Gastrocnemius medialis (tissue), 4 donors: ENCODE measurements at regions of chr11 and their contacts with region 1.

Region 1: GRCh38 chr11:64269380-64270234 is 14.9 kb downstream of the BAD start:
- DNase-seq: peak; percentile 99
- ATAC-seq: peak; percentile 84 to 91
- H3K4me3 ChIP-seq: peak overlapping the region; percentile 82 to 100 (median 93)
- H3K27ac ChIP-seq: peak overlapping the region; percentile 94 to 99 (median 98)
- H3K4me1 ChIP-seq: peaks cover 22% of the 10 kb centered on the region in 2 donors
- H3K27me3 ChIP-seq: no peaks in the 10 kb centered on the region
- CTCF ChIP-seq: peak in 3 of 5 experiments; percentile 11 to 22 (median 16)
- POLR2A ChIP-seq: peak; percentile 35 to 47

Region 2: GRCh38 chr11:63916837-63917691 is 352.5 kb before region 1 on chr11 and contains the start of gene RCOR2:
- in situ Hi-C with region 1: no loop called
- intact Hi-C with region 1: no loop called
- DNase-seq: peak in 1 of 2 donors; percentile 67
- ATAC-seq: peak; percentile 44 to 51
- H3K4me3 ChIP-seq: peak within 1 kb of the TSS; percentile 49 to 66 (median 60)
- H3K27ac ChIP-seq: peak within 1 kb of the TSS; percentile 76 to 85 (median 80)
- H3K4me1 ChIP-seq: peaks cover 28 to 39% of the 10 kb centered on the region in 2 donors
- H3K27me3 ChIP-seq: no peaks in the 10 kb centered on the region
- CTCF ChIP-seq: no peak
- POLR2A ChIP-seq: no peak
- total RNA-seq, gene RCOR2: 0.25 to 1.5 (median 0.45) TPM

Region 3: DNA sequence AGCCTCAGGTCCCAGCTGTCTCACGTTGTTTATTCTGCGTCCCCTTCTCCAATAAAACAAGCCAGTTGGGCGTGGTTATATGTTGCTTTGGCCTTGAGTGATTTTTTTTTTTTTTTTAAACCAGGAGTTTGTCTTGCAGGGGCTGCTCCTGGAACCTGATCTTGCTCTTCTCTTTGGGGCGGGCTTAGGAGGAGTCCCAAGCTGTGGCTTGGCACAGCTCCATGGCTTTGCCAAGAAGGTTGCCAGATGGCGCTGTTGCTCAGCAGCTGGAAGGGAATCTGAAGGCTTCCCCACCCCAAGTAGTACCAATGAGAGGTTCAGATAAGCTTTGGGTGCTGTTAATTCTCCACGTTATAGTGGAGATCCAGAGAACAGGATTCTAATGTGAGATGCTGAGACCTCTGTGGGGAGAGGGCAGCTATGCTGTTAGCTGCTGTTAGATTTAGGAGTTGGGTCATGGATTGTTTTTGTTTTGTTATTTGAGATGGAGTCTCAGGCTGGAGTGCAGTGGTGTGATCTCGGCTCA is 65.1 kb before region 1 on chr11:
- in situ Hi-C with region 1: no loop called
- intact Hi-C with region 1: loop called (anchors 1 kb)
- DNase-seq: peak; percentile 76 to 88
- ATAC-seq: peak; percentile 92 to 96
- H3K4me3 ChIP-seq: no peak overlapping the region
- H3K27ac ChIP-seq: peak overlapping the region; percentile 24 to 78 (median 26)
- H3K4me1 ChIP-seq: peaks cover 17 to 22% of the 10 kb centered on the region in 2 donors
- H3K27me3 ChIP-seq: no peaks in the 10 kb centered on the region
- CTCF ChIP-seq: peak; percentile 55 to 80 (median 69)
- POLR2A ChIP-seq: no peak

Region 4: DNA sequence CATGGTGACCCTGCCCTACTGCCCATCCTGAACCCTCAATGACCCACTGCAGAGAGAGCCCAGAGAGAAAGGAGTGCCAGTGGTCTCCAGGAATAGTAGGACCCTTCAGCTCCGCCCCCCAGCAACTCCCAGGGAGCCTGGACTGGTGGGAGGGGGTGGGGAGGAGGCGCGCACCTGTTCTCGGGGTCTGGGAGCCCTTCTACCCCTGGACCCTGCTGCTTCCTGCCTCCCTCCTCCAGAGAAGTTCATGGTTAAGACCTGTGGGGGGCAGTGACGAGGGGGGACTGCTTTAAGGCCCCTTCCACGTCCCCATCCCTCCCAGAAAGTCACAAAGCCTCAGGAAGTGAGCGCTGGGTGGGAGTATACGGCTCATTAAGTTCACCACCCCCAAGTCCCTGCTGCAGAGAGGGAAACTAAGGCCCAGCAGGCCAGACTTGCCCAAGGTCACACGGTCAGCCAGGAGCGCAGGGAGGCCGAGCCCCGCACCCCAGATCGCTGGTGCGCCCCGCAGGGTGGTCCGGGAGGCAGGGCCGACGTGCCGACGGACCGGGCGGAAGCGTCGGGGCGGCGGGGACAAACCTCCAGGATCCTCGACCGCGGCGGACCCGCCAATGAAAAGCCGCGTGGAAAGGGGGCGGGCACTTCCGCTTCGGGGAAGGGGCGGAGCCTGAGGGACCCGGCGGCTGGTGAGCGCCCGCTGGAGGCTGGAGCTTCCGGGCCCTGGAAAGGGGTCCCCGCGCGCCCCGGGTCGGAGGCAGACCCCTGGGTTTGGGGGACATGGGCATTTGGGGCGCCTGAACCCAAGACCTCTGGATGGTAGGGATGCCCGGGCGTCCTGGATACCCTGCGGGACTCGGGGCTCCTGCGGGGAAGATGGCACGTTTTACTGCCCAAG is 43.7 kb before region 1 on chr11 and contains the starts of genes NUDT22 and TRPT1:
- in situ Hi-C with region 1: no loop called
- intact Hi-C with region 1: no loop called
- DNase-seq: peak; percentile 85 to 90
- ATAC-seq: peak; percentile 70 to 72
- H3K4me3 ChIP-seq: peak within 1 kb of the TSS; percentile 86 to 92 (median 88)
- H3K27ac ChIP-seq: peak within 1 kb of the TSS; percentile 95 to 99 (median 96)
- H3K4me1 ChIP-seq: peaks cover 44 to 58% of the 10 kb centered on the region in 2 donors
- H3K27me3 ChIP-seq: no peaks in the 10 kb centered on the region
- CTCF ChIP-seq: peak in 4 of 5 experiments; percentile 6 to 37 (median 32)
- POLR2A ChIP-seq: peak; percentile 91 to 98
- total RNA-seq, gene NUDT22: 32.3 to 70.7 (median 53.4) TPM
- total RNA-seq, gene TRPT1: 80.9 to 231 (median 139) TPM

Region 5: GRCh38 chr11:64246871-64247728 is 22.5 kb before region 1 on chr11 and contains the start of gene PPP1R14B:
- in situ Hi-C with region 1: no loop called
- intact Hi-C with region 1: loop called (anchors 1 kb)
- DNase-seq: peak; percentile 84 to 86
- ATAC-seq: peak; percentile 52 to 62
- H3K4me3 ChIP-seq: peak within 1 kb of the TSS; percentile 80 to 98 (median 94)
- H3K27ac ChIP-seq: peak within 1 kb of the TSS; percentile 92 to 100 (median 96)
- H3K4me1 ChIP-seq: peaks cover 38 to 47% of the 10 kb centered on the region in 2 donors
- H3K27me3 ChIP-seq: no peaks in the 10 kb centered on the region
- CTCF ChIP-seq: peak in 4 of 5 experiments; percentile 25 to 31 (median 28)
- POLR2A ChIP-seq: peak; percentile 49 to 64
- total RNA-seq, gene PPP1R14B: 144 to 444 (median 237) TPM

Region 6: DNA sequence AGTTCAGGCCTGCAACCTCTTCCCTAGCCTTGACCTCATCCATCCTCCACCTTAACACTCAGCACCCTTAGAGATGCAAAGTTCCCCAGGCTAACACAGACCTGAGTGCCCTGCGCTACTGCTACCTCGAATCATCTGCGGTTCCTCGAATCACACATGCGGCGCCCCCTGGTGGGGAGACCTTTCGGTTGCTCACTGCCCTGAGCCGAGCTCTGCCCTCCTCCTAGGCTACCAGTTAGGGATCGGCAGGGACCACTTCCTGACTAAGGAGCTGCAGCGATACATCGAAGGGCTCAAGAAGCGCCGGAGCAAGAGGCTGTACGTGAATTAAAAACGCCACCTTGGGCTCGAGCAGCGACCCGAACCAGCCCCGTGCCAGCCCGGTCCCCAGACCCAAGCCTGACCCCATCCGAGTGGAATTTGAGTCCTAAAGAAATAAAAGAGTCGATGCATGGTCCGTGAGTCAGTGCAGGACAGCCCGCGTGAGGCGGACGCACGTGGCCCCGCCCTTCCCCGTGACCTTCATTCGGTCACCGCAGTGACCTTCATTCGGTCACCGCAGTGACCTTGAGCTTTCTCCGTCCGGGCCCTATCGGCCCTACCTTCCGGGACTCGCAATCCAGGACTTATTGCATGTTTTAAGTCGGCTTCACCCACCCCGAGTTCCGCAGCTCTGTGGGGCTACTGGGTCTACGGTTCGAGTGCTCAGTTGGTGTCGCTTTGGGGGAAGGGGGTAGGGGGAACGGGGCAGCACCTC is 34.9 kb after region 1 on chr11:
- in situ Hi-C with region 1: no loop called
- intact Hi-C with region 1: loop called (anchors 1 kb)
- DNase-seq: peak; percentile 77 to 91
- ATAC-seq: peak; percentile 36 to 53
- H3K4me3 ChIP-seq: peak overlapping the region; percentile 58 to 92 (median 64)
- H3K27ac ChIP-seq: peak overlapping the region; percentile 84 to 96 (median 90)
- H3K4me1 ChIP-seq: peaks cover 16 to 34% of the 10 kb centered on the region in 2 donors
- H3K27me3 ChIP-seq: peaks cover 16 to 26% (median 24%) of the 10 kb centered on the region in 3 donors
- CTCF ChIP-seq: peak; percentile 77 to 92 (median 88)
- POLR2A ChIP-seq: no peak